Body of pancreas (tissue), 4 donors: ENCODE measurements at regions of chr1 and their contacts with region 1.

Region 1: GRCh38 chr1:15337656-15338402 is 71.9 kb upstream of the EFHD2 start:
- DNase-seq: no peak
- ATAC-seq: peak; percentile 52
- H3K4me3 ChIP-seq: no peak overlapping the region
- H3K27ac ChIP-seq: peak overlapping the region in 1 of 4 donors; percentile 10
- H3K4me1 ChIP-seq: peaks cover 8% of the 10 kb centered on the region
- H3K27me3 ChIP-seq: no peaks in the 10 kb centered on the region
- CTCF ChIP-seq: no peak
- POLR2A ChIP-seq: no peak

Region 2: GRCh38 chr1:15515022-15515663 is 177.3 kb after region 1 on chr1:
- intact Hi-C with region 1: loop called (anchors 10 kb)
- DNase-seq: no peak
- ATAC-seq: no peak
- H3K4me3 ChIP-seq: no peak overlapping the region
- H3K27ac ChIP-seq: no peak overlapping the region
- H3K4me1 ChIP-seq: peaks cover 12% of the 10 kb centered on the region
- H3K27me3 ChIP-seq: no peaks in the 10 kb centered on the region
- CTCF ChIP-seq: no peak
- POLR2A ChIP-seq: no peak